ENCODE measurements at regions of chr1 and their contacts with region 1.

Region 1: GRCh38 chr1:8061210-8061609 is 35.1 kb upstream of the ERRFI1 start:
- DNase-seq: peak; percentile 86
- H3K4me3 ChIP-seq: no peak overlapping the region
- H3K27me3 ChIP-seq: no peaks in the 10 kb centered on the region
- CTCF ChIP-seq: no peak

Region 2: DNA sequence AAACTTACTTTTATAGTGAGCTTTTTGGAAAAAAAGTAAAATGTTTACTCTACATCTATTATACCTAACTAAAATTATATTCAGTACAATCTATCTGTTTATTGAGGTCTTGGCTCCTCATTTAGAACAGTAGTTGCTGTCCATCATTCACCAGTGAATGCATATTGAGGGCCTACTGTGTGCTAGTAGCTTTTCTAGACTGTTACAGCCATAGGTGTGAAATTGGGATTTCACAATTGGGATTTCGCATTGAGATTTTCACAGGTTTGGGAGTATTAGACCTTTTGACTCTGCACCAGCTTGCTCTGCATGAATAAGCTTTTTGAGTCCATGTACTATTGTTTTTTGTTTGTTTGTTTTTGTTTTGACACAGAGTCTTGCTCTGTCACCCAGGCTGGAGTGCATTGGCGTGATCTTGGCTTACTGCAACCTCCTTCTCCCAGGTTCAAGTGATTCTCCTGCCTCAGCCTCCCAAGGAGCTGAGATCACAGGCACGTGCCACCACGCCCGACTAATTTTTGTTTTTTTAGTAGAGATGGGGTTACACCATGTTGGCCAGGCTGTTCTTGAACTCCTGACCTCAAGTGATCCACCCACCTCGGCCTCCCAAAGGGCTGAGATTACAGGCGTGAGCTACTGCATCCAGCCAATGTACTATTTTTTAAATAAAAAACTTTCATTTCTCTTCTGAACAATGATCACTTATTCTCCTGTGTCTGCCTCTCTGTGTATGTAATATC is 12.1 kb after region 1 on chr1:
- CTCF ChIA-PET with region 1: interaction called, 12 read pairs
- POLR2A ChIA-PET with region 1: no interaction called
- DNase-seq: no peak
- H3K4me3 ChIP-seq: no peak overlapping the region
- H3K27me3 ChIP-seq: no peaks in the 10 kb centered on the region
- CTCF ChIP-seq: no peak

Region 3: DNA sequence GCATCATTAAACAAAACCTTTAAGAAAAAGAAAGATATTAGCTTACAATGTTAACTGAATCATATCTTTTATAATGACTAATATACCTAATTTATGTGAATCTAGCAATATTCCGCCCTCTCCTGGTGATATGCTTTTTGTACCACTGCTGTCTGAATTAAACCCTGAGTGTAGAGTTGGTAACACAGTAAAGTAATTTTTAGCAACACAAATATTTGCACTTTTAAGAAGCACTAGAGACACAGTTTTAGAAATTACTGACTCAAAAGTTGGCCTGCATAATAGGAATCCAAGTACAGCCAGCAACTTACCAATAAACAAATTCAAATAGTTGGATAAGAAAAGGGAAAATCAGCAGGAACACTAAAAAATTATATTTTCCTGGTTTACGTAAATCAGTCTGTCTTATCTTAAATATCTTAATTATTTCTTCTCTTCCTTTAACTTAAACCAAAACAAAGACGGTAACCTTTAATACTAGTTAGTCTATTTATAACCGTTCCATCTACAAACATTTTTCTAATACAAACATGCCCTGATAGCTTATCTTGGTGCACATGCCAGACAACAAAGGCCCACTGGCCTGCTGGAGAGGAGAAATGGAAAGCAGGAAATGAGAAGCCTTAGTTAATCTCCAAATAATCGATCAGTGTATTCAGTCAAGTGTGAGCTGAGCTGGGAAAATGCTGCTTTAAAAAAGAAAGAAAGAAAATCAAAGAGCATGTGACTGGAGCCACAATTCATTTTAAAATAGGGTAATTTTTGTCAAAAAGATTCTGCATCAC is 510.2 kb after region 1 on chr1:
- CTCF ChIA-PET with region 1: no interaction called
- POLR2A ChIA-PET with region 1: no interaction called
- DNase-seq: no peak
- H3K4me3 ChIP-seq: no peak overlapping the region
- H3K27me3 ChIP-seq: no peaks in the 10 kb centered on the region
- CTCF ChIP-seq: peak; percentile 42

Measured in BJ (cell line).